Activated CD4-positive, alpha-beta T cell treated with anti-CD3 and anti-CD28 coated beads, Interleukin-2, amount 10 ng/mL, durations not matched to agents 24 days and 14 days (primary cell): ENCODE measurements at regions of chr12 and their contacts with region 1.

Region 1: GRCh38 chr12:107372229-107372658 is 278.9 kb upstream of the CRY1 start:
- DNase-seq: peak; percentile 87
- H3K4me3 Mint-ChIP-seq: peak overlapping the region; percentile 69
- H3K27ac Mint-ChIP-seq: peak overlapping the region; percentile 86
- H3K4me1 Mint-ChIP-seq: peaks cover 72% of the 10 kb centered on the region
- H3K27me3 Mint-ChIP-seq: no peaks in the 10 kb centered on the region

Region 2: DNA sequence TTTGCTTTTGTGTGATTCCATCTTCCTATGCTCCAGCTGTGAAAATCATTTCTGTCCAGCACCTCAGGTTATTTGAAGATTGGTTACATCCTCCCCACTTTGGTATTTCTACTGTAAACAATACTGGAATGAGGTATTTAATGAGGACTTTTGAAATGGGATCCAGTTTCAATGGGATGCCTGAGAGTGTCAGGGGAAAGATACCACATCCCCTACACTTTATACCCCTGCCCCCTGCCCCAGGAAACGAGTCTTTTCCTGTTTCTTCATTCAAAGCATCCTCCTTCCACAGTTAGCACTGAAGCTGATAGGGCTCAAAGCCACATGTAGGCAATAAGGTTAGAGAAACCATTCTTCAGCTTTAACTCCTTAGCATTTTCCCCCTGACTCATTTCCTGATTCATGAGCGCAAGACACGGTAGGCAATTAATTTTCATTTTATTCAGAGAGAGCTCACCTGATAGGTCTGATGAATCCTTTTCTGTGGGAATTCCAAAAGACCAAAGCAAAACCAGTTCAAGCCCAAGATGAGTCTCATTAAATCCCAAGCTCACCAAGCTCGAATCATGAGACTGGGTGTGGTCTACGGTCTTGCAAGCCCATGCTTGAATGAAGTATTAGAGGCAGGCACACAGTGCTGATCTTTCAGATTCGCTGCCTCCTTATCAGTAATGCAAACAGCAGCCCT is 135.3 kb before region 1 on chr12:
- intact Hi-C with region 1: no loop called
- DNase-seq: no peak
- H3K4me3 Mint-ChIP-seq: no peak overlapping the region
- H3K27ac Mint-ChIP-seq: no peak overlapping the region
- H3K4me1 Mint-ChIP-seq: peaks cover 11% of the 10 kb centered on the region
- H3K27me3 Mint-ChIP-seq: peaks cover 5% of the 10 kb centered on the region

Region 3: GRCh38 chr12:107287436-107288413 is 84.5 kb before region 1 on chr12:
- intact Hi-C with region 1: loop called (anchors 2 kb)
- DNase-seq: peak; percentile 80
- H3K4me3 Mint-ChIP-seq: peak overlapping the region; percentile 29
- H3K27ac Mint-ChIP-seq: peak overlapping the region; percentile 66
- H3K4me1 Mint-ChIP-seq: peaks cover 17% of the 10 kb centered on the region
- H3K27me3 Mint-ChIP-seq: peaks cover 2% of the 10 kb centered on the region

Region 4: DNA sequence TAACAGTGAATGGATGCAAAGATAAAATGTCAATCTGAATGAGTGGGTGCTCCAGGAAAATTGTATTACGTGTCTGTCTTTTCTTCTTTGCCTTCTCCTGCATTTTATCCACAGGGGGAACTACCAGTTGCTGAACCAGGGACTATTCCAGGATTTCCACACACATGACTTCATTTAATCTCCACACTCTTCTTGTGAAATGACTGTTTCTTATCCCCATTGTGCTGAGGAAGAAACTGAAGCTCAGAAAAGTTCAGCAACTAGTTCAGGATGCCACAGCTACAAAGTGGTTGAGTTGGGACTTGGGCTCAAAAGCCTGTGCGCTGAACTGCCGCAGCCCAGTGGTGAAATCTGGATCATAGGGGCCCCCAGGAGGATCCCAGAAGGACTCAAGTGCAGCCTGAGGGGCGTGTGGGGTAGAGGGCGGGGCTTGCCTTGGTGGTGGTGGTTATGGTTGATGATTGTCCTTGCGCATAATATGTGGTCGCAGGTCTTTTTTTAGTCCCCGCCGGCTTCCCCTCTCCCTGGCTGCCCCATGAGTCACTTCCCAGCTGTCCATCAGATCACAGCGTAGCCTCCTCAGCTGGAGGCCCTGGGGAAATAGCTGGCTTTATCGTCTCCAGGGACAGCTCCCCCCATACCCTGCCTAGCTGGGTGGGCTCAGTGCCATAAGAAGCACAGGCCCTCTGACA is 43.7 kb before region 1 on chr12:
- intact Hi-C with region 1: loop called (anchors 1 kb)
- DNase-seq: no peak
- H3K4me3 Mint-ChIP-seq: peak overlapping the region; percentile 19
- H3K27ac Mint-ChIP-seq: no peak overlapping the region
- H3K4me1 Mint-ChIP-seq: peaks cover 75% of the 10 kb centered on the region
- H3K27me3 Mint-ChIP-seq: no peaks in the 10 kb centered on the region

Region 5: DNA sequence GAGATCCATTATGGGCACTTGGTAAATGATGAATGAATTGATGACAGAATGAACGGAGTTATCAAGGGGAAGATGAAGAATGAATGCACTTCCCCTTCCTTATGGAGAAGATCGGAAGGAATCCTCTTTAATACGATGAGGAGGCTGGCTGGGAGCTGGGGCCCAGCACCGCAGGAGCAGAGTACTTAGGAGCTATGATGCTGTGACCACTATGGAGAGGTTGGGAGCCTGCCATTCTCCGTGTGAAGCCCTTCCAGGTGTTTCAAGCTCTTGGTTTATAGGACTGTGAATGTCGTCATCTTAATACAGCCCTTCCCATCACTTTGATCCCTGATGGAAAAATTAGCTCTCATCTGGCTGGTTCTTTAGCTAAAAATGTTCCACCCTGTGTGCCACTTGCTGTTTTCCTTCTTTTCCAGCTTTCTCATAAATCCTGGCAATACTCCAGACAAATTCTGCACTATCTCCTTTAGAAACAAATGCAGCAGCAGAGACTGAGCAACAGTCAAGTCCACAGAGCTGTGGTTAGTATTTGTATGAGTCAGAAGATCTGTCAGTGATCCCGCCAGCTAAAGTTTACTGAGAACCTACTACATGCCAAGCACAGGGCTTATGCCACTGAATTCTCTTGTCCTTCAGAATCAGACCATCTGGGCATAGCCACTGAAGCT is 15.8 kb before region 1 on chr12:
- intact Hi-C with region 1: loop called (anchors 1 kb)
- DNase-seq: peak; percentile 70
- H3K4me3 Mint-ChIP-seq: peak overlapping the region; percentile 4
- H3K27ac Mint-ChIP-seq: no peak overlapping the region
- H3K4me1 Mint-ChIP-seq: peaks cover 65% of the 10 kb centered on the region
- H3K27me3 Mint-ChIP-seq: no peaks in the 10 kb centered on the region

Region 6: DNA sequence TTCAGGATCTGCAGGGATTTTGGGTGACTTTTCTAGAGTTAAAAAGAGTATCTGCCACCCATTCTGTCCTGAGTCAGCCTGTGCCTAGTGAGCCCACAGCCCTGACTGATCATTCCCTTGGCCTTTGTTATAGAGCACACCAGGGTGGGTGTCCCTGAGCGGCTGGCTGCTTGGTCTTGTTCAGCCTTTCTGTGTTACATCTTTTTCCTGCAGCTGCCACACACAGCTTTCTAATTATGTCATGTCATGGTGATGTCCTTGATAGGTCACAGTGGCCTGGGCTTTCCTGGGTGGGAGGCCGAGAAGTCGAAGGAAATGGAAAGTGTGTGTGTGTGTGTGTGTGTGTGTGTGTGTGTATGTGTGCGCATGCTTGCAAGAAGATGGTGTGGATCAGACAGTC is 14.3 kb after region 1 on chr12:
- intact Hi-C with region 1: loop called (anchors 2 kb)
- DNase-seq: no peak
- H3K4me3 Mint-ChIP-seq: no peak overlapping the region
- H3K27ac Mint-ChIP-seq: no peak overlapping the region
- H3K4me1 Mint-ChIP-seq: peaks cover 46% of the 10 kb centered on the region
- H3K27me3 Mint-ChIP-seq: no peaks in the 10 kb centered on the region

Region 7: GRCh38 chr12:107402041-107403022 is 30.1 kb after region 1 on chr12:
- intact Hi-C with region 1: loop called (anchors 1 kb)
- DNase-seq: peak; percentile 89
- H3K4me3 Mint-ChIP-seq: no peak overlapping the region
- H3K27ac Mint-ChIP-seq: no peak overlapping the region
- H3K4me1 Mint-ChIP-seq: peaks cover 30% of the 10 kb centered on the region
- H3K27me3 Mint-ChIP-seq: no peaks in the 10 kb centered on the region

Region 8: GRCh38 chr12:108289350-108290161 is 917.3 kb after region 1 on chr12:
- intact Hi-C with region 1: no loop called
- DNase-seq: no peak
- H3K4me3 Mint-ChIP-seq: no peak overlapping the region
- H3K27ac Mint-ChIP-seq: no peak overlapping the region
- H3K4me1 Mint-ChIP-seq: no peaks in the 10 kb centered on the region
- H3K27me3 Mint-ChIP-seq: peaks cover 3% of the 10 kb centered on the region